ENCODE measurements at regions of chr13 and their contacts with region 1.

Region 1: GRCh38 chr13:79541426-79542049 is 60.6 kb downstream of the NDFIP2 start:
- DNase-seq: peak; percentile 56
- ATAC-seq: peak; percentile 73
- H3K4me3 ChIP-seq: no peak overlapping the region
- H3K27ac ChIP-seq: no peak overlapping the region
- H3K4me1 ChIP-seq: no peaks in the 10 kb centered on the region
- H3K27me3 ChIP-seq: no peaks in the 10 kb centered on the region
- CTCF ChIP-seq: peak; percentile 45 to 84 (median 48); a peak in 4 of 6 replicates
- POLR2A ChIP-seq: no peak
- RAD21 ChIP-seq: peak; percentile 75

Region 2: DNA sequence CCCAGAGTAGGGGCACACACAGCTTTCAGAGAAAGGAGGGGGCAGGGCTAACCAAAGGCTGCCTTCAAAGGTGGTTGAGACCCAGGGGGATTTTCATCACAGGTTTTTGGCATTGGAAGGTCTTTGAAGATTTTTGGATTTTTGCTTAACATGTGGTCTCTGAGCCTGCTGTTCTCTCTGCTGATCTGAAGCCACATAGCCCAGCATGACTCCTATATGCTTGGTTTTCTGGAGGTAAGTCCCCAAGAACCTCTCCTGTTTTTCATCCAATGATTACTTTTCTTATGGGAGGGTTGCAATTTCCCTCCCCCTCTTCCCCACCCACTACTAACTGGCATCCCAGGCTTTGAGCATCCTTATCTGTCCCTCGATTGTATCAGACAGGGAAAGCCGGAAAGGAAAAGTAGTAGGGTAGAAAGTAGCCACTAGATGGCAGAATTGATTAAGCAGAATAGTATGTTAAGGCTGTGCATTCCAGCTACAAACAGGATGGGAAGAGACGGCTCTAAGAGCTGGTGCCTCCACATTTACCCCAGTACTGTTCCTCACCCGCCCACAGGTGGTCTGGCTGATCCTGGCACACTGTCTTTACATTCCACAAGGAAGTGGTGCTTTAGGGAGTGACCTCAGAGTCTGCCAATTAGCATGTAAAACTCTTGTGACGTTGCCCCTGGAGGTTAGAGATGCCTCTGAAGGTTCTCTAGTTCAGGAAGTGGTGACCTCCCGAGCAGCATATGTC is 1404.0 kb before region 1 on chr13:
- CTCF ChIA-PET with region 1: interaction called, 3 read pairs
- POLR2A ChIA-PET with region 1: no interaction called
- RAD21 ChIA-PET with region 1: no interaction called
- intact Hi-C with region 1: loop called (anchors 5 kb)
- DNase-seq: peak; percentile 33
- ATAC-seq: peak; percentile 92
- H3K4me3 ChIP-seq: no peak overlapping the region
- H3K27ac ChIP-seq: no peak overlapping the region
- H3K4me1 ChIP-seq: no peaks in the 10 kb centered on the region
- H3K27me3 ChIP-seq: no peaks in the 10 kb centered on the region
- CTCF ChIP-seq: peak; percentile 35 to 62 (median 54); a peak in 4 of 6 replicates
- POLR2A ChIP-seq: no peak
- RAD21 ChIP-seq: peak; percentile 63

Region 3: DNA sequence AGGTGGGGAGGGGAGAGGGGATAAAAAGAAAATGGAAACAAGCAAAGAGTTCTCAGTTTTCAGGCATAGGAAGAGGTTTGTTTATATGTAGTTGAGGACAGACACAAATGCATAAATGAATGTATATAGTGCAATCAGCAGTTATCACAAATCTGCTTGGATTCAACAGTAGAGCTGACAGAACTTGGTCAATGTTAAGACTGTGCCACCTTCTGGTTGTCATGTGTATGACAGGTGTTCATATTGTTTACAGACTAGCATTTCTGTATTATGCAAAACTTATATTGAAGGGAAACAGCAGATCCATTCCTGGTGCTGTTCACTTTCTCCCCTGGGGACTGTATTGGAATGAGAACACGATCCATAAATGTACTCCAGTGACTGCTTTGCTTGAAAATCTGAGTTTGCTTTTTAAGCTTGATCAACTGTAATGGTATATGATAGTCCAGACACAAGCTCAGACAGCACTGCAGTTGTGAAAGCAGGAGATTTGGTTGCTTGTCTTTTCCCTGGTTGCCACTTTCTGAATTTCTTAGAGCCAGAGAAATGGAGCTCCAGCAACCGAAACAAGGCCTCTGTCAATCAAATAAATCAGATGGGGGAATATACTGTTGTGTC is 563.0 kb before region 1 on chr13:
- CTCF ChIA-PET with region 1: no interaction called
- POLR2A ChIA-PET with region 1: no interaction called
- RAD21 ChIA-PET with region 1: no interaction called
- intact Hi-C with region 1: loop called (anchors 10 kb)
- DNase-seq: peak; percentile 48
- ATAC-seq: peak; percentile 84
- H3K4me3 ChIP-seq: no peak overlapping the region
- H3K27ac ChIP-seq: no peak overlapping the region
- H3K4me1 ChIP-seq: no peaks in the 10 kb centered on the region
- H3K27me3 ChIP-seq: peaks cover 4% of the 10 kb centered on the region
- CTCF ChIP-seq: peak; percentile 34 to 65 (median 52); a peak in 5 of 6 replicates
- POLR2A ChIP-seq: no peak
- RAD21 ChIP-seq: peak; percentile 56

Region 4: GRCh38 chr13:79392882-79393563 is 148.5 kb before region 1 on chr13:
- CTCF ChIA-PET with region 1: interaction called, 13 read pairs
- POLR2A ChIA-PET with region 1: no interaction called
- RAD21 ChIA-PET with region 1: no interaction called
- intact Hi-C with region 1: no loop called
- DNase-seq: no peak
- ATAC-seq: no peak
- H3K4me3 ChIP-seq: no peak overlapping the region
- H3K27ac ChIP-seq: no peak overlapping the region
- H3K4me1 ChIP-seq: no peaks in the 10 kb centered on the region
- H3K27me3 ChIP-seq: no peaks in the 10 kb centered on the region
- CTCF ChIP-seq: no peak
- POLR2A ChIP-seq: no peak
- RAD21 ChIP-seq: no peak

Region 5: DNA sequence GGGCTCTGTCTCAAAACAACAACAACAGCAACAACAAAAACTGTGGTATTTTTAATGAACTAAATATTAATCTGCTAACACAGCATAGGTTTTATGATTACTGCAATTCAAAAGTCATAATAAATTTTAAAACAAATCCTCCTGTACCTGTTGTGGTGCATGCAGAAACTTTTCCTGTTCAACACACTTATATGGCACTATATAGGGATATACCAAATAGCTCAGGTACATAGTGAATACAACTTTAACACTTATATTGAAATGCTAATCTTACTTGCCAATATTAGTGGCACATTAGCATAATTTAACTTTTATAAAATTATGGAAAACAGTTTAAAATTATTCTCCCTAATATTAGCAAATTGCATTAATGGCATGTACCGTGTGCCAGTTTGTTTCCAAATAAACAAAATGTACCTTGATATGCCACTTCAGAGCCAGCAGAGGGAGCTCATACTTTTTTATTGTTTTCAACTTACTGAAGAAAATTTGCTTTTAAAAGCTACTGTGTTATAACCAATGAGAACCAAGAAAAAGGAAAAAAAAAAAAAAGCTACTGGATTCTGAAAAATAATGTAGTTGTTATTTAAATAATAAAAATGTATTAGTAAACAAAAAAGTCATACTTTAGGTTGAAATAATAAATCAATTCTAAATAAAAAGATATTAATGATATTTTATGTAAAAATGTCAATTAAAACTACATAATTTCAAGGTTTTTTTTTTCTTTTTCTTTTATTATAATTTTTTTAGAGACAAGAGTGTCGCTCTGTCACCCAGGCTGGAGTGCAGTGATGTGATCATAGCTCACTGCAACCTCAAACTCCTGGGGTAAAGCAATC is 117.5 kb before region 1 on chr13:
- CTCF ChIA-PET with region 1: interaction called, 184 read pairs
- POLR2A ChIA-PET with region 1: interaction called, 3 read pairs
- RAD21 ChIA-PET with region 1: interaction called, 10 to 14 read pairs
- intact Hi-C with region 1: loop called (anchors 1 kb)
- DNase-seq: peak; percentile 28
- ATAC-seq: peak; percentile 61
- H3K4me3 ChIP-seq: no peak overlapping the region
- H3K27ac ChIP-seq: no peak overlapping the region
- H3K4me1 ChIP-seq: no peaks in the 10 kb centered on the region
- H3K27me3 ChIP-seq: no peaks in the 10 kb centered on the region
- CTCF ChIP-seq: peak; percentile 44 to 58 (median 53); a peak in 4 of 6 replicates
- POLR2A ChIP-seq: no peak
- RAD21 ChIP-seq: peak; percentile 67

Region 6: DNA sequence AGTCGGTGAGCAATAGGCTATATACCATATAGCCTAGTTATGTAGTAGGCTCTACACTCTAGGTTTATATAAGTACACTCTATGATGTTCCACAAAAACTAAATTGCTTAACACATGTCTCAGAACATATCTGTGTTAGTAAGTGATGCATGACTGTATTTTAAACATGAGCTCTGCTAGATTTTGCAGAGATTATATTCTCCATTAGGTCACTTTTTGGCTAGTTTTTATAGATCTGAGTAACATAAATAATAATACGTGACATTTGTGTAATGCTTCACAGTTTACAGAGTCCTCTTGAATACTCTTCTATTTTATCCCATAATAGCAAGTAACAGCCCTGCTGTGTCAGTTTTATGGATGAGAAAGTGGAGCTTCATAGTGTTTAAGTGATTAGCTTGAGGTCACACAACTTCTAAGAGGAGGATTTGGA is 12.8 kb before region 1 on chr13:
- CTCF ChIA-PET with region 1: interaction called, 12 read pairs
- POLR2A ChIA-PET with region 1: no interaction called
- RAD21 ChIA-PET with region 1: no interaction called
- intact Hi-C with region 1: no loop called
- DNase-seq: no peak
- ATAC-seq: no peak
- H3K4me3 ChIP-seq: no peak overlapping the region
- H3K27ac ChIP-seq: no peak overlapping the region
- H3K4me1 ChIP-seq: no peaks in the 10 kb centered on the region
- H3K27me3 ChIP-seq: no peaks in the 10 kb centered on the region
- CTCF ChIP-seq: no peak
- POLR2A ChIP-seq: no peak
- RAD21 ChIP-seq: no peak

Region 7: GRCh38 chr13:79874396-79875360 is 333.1 kb after region 1 on chr13:
- CTCF ChIA-PET with region 1: no interaction called
- POLR2A ChIA-PET with region 1: no interaction called
- RAD21 ChIA-PET with region 1: no interaction called
- intact Hi-C with region 1: no loop called
- DNase-seq: no peak
- ATAC-seq: no peak
- H3K4me3 ChIP-seq: no peak overlapping the region
- H3K27ac ChIP-seq: no peak overlapping the region
- H3K4me1 ChIP-seq: no peaks in the 10 kb centered on the region
- H3K27me3 ChIP-seq: no peaks in the 10 kb centered on the region
- CTCF ChIP-seq: no peak
- POLR2A ChIP-seq: no peak
- RAD21 ChIP-seq: no peak

Region 8: DNA sequence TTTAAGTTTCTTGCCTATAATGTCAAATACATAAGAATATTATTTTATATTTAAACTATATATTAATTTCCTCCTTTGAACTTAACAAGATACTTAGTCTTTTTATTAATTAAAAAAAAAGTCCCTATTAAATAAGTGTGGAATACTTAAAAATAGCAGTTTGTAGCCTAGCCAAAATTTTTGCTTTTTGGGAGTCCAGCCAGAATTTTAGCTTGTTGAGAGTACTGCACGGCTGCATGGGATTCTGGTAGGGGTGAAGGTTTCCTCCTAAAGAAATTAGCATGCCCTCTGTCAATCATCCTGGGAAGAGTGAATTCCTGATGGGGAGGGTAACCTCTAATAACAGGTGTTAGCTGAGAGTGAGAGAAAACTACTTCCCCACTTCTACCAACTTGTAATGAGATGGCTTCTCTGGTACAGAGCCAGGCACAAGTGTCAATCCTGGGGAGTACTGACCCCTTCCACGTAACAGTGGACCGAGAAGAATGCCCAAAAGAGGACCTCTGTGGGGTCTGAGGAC is 603.7 kb after region 1 on chr13:
- CTCF ChIA-PET with region 1: no interaction called
- POLR2A ChIA-PET with region 1: no interaction called
- RAD21 ChIA-PET with region 1: no interaction called
- intact Hi-C with region 1: no loop called
- DNase-seq: no peak
- ATAC-seq: no peak
- H3K4me3 ChIP-seq: no peak overlapping the region
- H3K27ac ChIP-seq: no peak overlapping the region
- H3K4me1 ChIP-seq: no peaks in the 10 kb centered on the region
- H3K27me3 ChIP-seq: no peaks in the 10 kb centered on the region
- CTCF ChIP-seq: no peak
- POLR2A ChIP-seq: no peak
- RAD21 ChIP-seq: no peak

Measured in HCT116 (cell line).